ENCODE measurements at regions of chr7 and their contacts with region 1.

Region 1: DNA sequence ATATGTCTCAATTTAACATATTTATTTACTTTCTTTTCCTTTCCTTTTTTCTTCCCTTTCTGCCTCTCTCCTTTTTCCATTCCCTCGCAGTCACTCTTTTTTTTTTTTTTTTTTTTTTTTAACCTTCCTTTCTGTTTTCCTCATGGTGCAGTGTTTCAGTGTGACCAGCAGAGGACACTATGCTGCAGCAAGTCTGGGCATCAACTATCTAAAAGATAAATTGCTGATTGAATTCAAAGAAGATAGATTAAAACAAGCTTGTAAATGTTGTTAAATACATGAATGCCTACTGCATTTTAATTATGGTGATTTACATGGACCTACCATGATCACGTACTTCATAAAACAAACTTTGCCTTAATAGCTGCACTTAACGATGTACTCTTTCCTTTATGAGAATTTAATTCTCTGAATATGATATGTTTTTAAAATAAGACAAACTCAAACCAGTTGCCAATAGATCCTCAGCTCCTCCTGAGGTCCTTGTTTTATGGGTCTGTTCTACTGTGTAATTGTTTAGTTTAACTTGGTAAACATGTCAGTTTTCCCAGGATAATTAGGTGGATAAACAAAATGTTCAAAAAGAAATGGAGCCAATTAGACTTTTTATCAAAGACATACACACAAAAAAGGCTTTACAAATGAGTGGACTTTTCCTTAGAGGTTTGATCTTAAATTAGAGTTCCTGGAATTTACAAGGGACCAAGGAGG is 101.0 kb upstream of the AGR3 start:
- DNase-seq: no peak
- H3K4me3 ChIP-seq: no peak overlapping the region
- H3K27ac ChIP-seq: peak overlapping the region in 1 of 2 donors; percentile 6
- H3K4me1 ChIP-seq: no peaks in the 10 kb centered on the region
- H3K27me3 ChIP-seq: no peaks in the 10 kb centered on the region
- CTCF ChIP-seq: peak; percentile 50 to 82 (median 73)
- POLR2A ChIP-seq: no peak

Region 2: GRCh38 chr7:16891338-16891737 is 91.5 kb before region 1 on chr7:
- intact Hi-C with region 1: no loop called
- DNase-seq: peak; percentile 42
- H3K4me3 ChIP-seq: no peak overlapping the region
- H3K27ac ChIP-seq: no peak overlapping the region
- H3K4me1 ChIP-seq: peaks cover 2% of the 10 kb centered on the region
- H3K27me3 ChIP-seq: no peaks in the 10 kb centered on the region
- CTCF ChIP-seq: peak in 3 of 4 experiments; percentile 29 to 57 (median 52)
- POLR2A ChIP-seq: no peak

Region 3: DNA sequence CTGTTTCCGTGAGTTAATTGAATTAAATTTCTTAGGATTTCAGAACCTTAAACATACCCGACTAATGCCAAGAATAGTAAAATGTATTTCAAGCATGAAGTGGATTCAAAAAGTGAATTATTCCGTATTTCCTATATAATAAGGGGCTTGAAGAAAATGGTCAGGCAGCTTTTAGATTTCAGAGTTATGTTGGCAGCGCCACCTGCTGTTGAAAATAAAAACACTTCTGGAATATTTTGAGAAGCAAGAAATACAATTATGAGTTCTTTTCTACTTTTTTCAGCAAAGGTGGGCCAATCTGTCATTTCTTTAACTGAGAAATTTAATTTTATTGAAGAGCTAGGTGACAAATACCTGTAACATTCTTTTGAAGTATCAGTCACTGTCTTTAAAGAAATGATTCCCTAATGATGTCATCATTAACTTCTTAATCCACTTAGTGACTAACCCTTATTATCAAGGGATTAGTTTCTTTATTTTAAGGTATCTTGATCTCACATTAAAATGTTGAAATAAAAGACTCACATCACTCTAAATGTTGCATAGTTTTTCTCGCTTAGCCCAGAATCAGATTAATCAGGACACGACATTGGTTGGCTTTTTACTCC is 64.4 kb before region 1 on chr7:
- intact Hi-C with region 1: no loop called
- DNase-seq: peak; percentile 28
- H3K4me3 ChIP-seq: no peak overlapping the region
- H3K27ac ChIP-seq: no peak overlapping the region
- H3K4me1 ChIP-seq: no peaks in the 10 kb centered on the region
- H3K27me3 ChIP-seq: no peaks in the 10 kb centered on the region
- CTCF ChIP-seq: peak; percentile 37 to 90 (median 80)
- POLR2A ChIP-seq: no peak

Region 4: DNA sequence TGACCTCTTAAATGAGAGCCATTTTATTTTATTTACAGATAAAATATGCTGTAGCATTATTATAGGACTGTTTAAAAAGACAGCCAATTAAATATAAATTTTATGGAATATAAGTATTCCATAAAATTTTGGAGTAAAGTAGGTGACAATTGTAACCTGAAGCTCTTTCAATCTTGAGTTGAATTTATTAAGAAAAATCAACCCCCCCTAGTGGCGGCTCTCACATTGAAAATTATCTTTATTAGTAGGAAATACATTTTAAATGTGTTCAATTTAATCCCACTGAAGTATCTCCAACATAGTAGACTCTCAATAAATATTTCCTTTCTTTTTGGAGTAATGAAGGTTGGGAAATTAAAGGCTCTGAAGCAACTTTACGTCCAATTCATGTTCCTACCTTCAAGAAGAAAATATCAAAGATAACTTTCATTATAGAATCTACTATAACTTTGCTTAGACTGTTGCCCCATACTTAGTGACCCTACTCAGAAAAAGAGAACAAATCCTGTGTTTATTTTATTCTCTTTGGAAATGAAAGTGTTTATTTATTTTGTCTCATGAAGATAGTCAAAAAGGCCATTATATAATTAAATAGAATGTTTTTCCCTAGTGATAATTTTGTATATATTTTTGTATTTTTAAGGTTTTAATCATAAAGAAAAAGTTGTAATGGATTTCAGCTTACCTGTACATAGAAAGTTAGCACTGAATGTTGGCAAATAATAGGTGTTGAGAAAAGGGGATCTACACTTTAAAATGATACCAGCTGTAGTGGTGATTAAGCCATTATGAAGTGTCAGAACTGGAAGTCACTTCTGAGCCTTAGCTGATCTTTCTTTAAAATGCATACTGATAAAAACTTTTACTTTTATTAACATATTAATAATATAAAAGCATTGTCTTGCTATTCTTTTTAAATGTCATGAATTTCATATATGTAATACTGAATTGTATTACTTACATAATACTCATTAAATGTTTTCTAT is 319.0 kb after region 1 on chr7:
- intact Hi-C with region 1: loop called (anchors 5 kb)
- DNase-seq: peak; percentile 58
- H3K4me3 ChIP-seq: peak overlapping the region in 1 of 2 donors; percentile 76
- H3K27ac ChIP-seq: peak overlapping the region in 1 of 2 donors; percentile 27
- H3K4me1 ChIP-seq: no peaks in the 10 kb centered on the region
- H3K27me3 ChIP-seq: no peaks in the 10 kb centered on the region
- CTCF ChIP-seq: peak; percentile 52 to 71 (median 70)
- POLR2A ChIP-seq: no peak

Region 5: GRCh38 chr7:17530741-17531417 is 548.1 kb after region 1 on chr7:
- intact Hi-C with region 1: loop called (anchors 10 kb)
- DNase-seq: no peak
- H3K4me3 ChIP-seq: no peak overlapping the region
- H3K27ac ChIP-seq: no peak overlapping the region
- H3K4me1 ChIP-seq: no peaks in the 10 kb centered on the region
- H3K27me3 ChIP-seq: no peaks in the 10 kb centered on the region
- CTCF ChIP-seq: peak in 1 of 4 experiments; percentile 22
- POLR2A ChIP-seq: no peak

Region 6: DNA sequence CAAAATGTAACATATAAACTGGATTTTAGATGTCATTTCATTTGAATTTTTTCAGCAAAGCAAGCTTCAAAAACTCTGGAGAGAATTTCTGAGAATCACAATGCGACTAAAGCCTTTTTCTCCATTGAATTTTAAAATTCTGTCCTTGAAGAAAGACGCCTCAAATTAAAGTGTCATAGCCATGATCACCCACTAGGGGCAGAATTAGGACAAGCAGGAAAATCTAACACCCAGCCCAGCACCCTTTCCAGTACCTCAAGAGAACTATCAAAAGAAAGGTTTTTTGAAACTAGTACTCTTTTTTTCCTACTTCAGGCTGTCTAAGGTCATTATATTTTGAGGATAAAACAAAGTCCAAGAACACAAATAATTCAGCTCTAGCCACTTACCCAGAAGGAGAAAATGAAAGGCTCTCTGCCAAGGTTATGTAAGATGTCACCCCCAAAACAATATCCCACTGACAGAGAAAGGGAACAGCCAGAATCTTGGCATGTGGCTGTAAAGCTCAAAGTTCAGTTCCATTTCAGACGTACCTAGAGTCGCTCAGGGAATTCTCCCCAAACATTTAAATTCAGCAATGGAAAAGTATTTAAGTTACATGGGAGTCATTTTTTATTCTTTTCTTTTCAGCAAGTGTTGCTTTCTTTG is 658.1 kb after region 1 on chr7:
- intact Hi-C with region 1: loop called (anchors 10 kb)
- DNase-seq: no peak
- H3K4me3 ChIP-seq: no peak overlapping the region
- H3K27ac ChIP-seq: no peak overlapping the region
- H3K4me1 ChIP-seq: no peaks in the 10 kb centered on the region
- H3K27me3 ChIP-seq: no peaks in the 10 kb centered on the region
- CTCF ChIP-seq: peak in 3 of 4 experiments; percentile 21 to 53 (median 32)
- POLR2A ChIP-seq: no peak

Region 7: GRCh38 chr7:17680943-17681351 is 698.2 kb after region 1 on chr7:
- intact Hi-C with region 1: loop called (anchors 10 kb)
- DNase-seq: no peak
- H3K4me3 ChIP-seq: no peak overlapping the region
- H3K27ac ChIP-seq: no peak overlapping the region
- H3K4me1 ChIP-seq: no peaks in the 10 kb centered on the region
- H3K27me3 ChIP-seq: no peaks in the 10 kb centered on the region
- CTCF ChIP-seq: peak; percentile 18 to 67 (median 41)
- POLR2A ChIP-seq: no peak